CD8-positive, alpha-beta T cell (primary cell): ENCODE measurements at regions of chr2 and their contacts with region 1.

Region 1: DNA sequence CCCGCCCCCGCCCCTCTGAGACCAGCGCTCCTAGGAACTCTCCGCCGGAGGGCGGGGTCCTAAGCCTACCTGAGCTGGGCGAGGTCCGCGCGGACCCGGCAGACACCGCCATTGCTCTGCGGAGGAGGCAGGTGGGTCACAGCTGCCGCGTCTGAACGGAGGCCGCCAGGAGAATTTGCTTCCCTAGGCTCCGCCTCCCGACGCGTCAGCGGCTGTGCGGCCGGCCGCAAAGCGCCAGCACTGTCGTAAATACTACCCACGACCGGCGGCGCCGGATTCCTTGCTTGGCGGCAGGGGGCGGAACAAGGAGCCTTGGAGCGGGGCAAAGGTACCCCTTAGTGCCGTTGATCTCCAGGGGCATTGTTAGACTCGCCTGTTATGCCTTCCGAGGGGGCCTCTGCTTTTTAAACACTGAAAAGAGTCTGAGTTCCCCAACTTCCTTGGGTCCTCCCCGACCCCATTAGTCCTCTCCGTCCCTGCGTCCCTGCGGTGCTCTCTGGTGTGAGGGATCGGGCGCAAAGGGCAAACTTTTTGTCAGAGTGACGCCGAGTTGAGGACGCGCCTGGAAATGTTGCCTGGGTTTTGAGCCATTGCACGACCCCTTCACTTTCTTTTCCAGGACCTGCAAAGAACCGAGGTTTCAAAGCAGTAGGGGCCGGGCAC is at the start of gene GGCX:
- DNase-seq: peak; percentile 89 to 97 (median 96)
- ATAC-seq: peak; percentile 91
- H3K4me3 ChIP-seq: peak within 1 kb of the TSS; percentile 77 to 82
- H3K4me3 Mint-ChIP-seq: peak within 1 kb of the TSS; percentile 94
- H3K27ac ChIP-seq: peak within 1 kb of the TSS; percentile 72 to 73
- H3K27ac Mint-ChIP-seq: peak within 1 kb of the TSS; percentile 96
- H3K4me1 ChIP-seq: peaks cover 6% of the 10 kb centered on the region
- H3K4me1 Mint-ChIP-seq: peaks cover 21% of the 10 kb centered on the region
- H3K27me3 ChIP-seq: no peaks in the 10 kb centered on the region
- H3K27me3 Mint-ChIP-seq: no peaks in the 10 kb centered on the region
- CTCF ChIP-seq: no peak
- total RNA-seq, gene GGCX: 20.7 to 24.0 TPM

Region 2: GRCh38 chr2:85354286-85355072 is 207.0 kb before region 1 on chr2 and contains the starts of genes ELMOD3 and RETSAT:
- CTCF ChIA-PET with region 1: interaction called, 9 read pairs
- POLR2A ChIA-PET with region 1: interaction called, 3 read pairs
- intact Hi-C with region 1: loop called in 1 of 2 experiments (anchors 5 kb)
- DNase-seq: peak; percentile 92 to 99 (median 95)
- ATAC-seq: peak; percentile 98
- H3K4me3 ChIP-seq: peak within 1 kb of the TSS; percentile 85 to 94
- H3K4me3 Mint-ChIP-seq: peak within 1 kb of the TSS; percentile 100
- H3K27ac ChIP-seq: peak within 1 kb of the TSS; percentile 82 to 92
- H3K27ac Mint-ChIP-seq: peak within 1 kb of the TSS; percentile 100
- H3K4me1 ChIP-seq: peaks cover 31% of the 10 kb centered on the region
- H3K4me1 Mint-ChIP-seq: peaks cover 51% of the 10 kb centered on the region
- H3K27me3 ChIP-seq: no peaks in the 10 kb centered on the region
- H3K27me3 Mint-ChIP-seq: no peaks in the 10 kb centered on the region
- CTCF ChIP-seq: no peak
- total RNA-seq, gene ELMOD3: 10.8 to 12.1 TPM
- total RNA-seq, gene RETSAT: 19.0 to 19.6 TPM

Region 3: GRCh38 chr2:85577386-85578242 is 16.2 kb after region 1 on chr2 and contains the start of gene VAMP8:
- CTCF ChIA-PET with region 1: interaction called, 3 read pairs
- POLR2A ChIA-PET with region 1: interaction called, 4 read pairs
- intact Hi-C with region 1: loop called in 1 of 2 experiments (anchors 2 kb)
- DNase-seq: peak; percentile 28 to 78 (median 64)
- ATAC-seq: peak; percentile 79
- H3K4me3 ChIP-seq: peak within 1 kb of the TSS; percentile 76 to 85
- H3K4me3 Mint-ChIP-seq: peak within 1 kb of the TSS; percentile 93
- H3K27ac ChIP-seq: peak within 1 kb of the TSS; percentile 64 to 78
- H3K27ac Mint-ChIP-seq: peak within 1 kb of the TSS; percentile 92
- H3K4me1 ChIP-seq: peaks cover 18% of the 10 kb centered on the region
- H3K4me1 Mint-ChIP-seq: peaks cover 43% of the 10 kb centered on the region
- H3K27me3 ChIP-seq: no peaks in the 10 kb centered on the region
- H3K27me3 Mint-ChIP-seq: no peaks in the 10 kb centered on the region
- CTCF ChIP-seq: no peak
- total RNA-seq, gene VAMP8: 28.1 to 28.7 TPM

Region 4: DNA sequence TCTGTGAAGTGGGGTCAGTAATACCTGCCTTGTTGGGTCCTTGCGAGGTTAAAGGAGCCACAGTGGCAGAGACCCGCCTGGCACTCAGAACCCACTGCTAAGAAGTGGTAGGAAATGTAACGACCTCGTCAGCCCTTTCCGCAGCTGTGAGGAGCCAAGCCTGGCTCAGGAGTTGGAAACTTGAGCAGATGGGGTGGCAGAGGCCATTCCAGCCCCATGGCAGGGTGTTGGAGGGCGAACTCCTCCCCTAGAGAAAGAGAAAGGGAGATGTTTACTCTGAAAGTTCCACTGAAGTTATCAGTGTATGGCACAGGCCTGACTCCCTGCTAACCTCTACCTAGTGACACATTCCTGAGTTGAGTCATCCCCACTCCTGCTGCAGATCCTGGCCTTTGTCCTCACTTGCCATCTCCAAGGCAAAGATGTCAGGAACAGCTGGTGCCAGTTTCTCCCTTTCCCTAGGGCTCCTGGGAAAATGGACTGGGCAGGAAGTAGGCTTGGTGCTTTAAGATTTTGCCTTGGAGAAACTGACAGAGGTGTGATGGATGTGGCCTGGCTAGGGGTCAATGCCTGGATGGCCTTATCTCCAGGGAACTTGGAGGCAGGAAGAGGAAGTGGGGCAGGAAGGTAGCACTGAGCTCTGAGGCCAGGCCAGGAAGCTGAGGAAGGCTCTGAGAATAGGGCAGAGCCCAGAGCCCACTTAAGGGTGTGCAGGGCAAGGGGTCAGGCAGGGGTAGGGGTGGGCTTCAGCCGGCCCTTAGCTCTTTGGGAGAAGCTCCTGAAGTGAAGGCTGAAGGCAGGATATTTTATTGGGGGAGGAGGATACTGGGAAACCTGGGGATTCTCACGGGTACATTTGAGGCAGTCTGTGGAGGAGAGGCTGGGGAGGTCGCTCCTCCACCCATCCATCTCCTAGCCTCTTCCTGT is 23.7 kb after region 1 on chr2:
- CTCF ChIA-PET with region 1: interaction called, 3 read pairs
- POLR2A ChIA-PET with region 1: interaction called, 13 read pairs
- intact Hi-C with region 1: no loop called
- DNase-seq: peak in 4 of 9 experiments; percentile 19 to 60 (median 40)
- ATAC-seq: peak; percentile 45
- H3K4me3 ChIP-seq: peak overlapping the region; percentile 67 to 78
- H3K4me3 Mint-ChIP-seq: peak overlapping the region; percentile 90
- H3K27ac ChIP-seq: peak overlapping the region; percentile 54 to 76
- H3K27ac Mint-ChIP-seq: peak overlapping the region; percentile 94
- H3K4me1 ChIP-seq: peaks cover 33% of the 10 kb centered on the region
- H3K4me1 Mint-ChIP-seq: peaks cover 57% of the 10 kb centered on the region
- H3K27me3 ChIP-seq: no peaks in the 10 kb centered on the region
- H3K27me3 Mint-ChIP-seq: no peaks in the 10 kb centered on the region
- CTCF ChIP-seq: no peak

Region 5: GRCh38 chr2:85595301-85596025 is 34.0 kb after region 1 on chr2 and contains the start of gene RNF181:
- CTCF ChIA-PET with region 1: interaction called, 3 read pairs
- POLR2A ChIA-PET with region 1: interaction called, 5 read pairs
- intact Hi-C with region 1: loop called (anchors 2 kb)
- DNase-seq: peak; percentile 72 to 97 (median 89)
- ATAC-seq: peak; percentile 98
- H3K4me3 ChIP-seq: peak within 1 kb of the TSS; percentile 75 to 78
- H3K4me3 Mint-ChIP-seq: peak within 1 kb of the TSS; percentile 97
- H3K27ac ChIP-seq: peak within 1 kb of the TSS; percentile 73 to 77
- H3K27ac Mint-ChIP-seq: peak within 1 kb of the TSS; percentile 97
- H3K4me1 ChIP-seq: peaks cover 25% of the 10 kb centered on the region
- H3K4me1 Mint-ChIP-seq: peaks cover 35% of the 10 kb centered on the region
- H3K27me3 ChIP-seq: no peaks in the 10 kb centered on the region
- H3K27me3 Mint-ChIP-seq: no peaks in the 10 kb centered on the region
- CTCF ChIP-seq: no peak
- total RNA-seq, gene RNF181: 38.1 to 41.0 TPM

Region 6: GRCh38 chr2:85602476-85603234 is 41.2 kb after region 1 on chr2 and contains the start of gene TMEM150A:
- CTCF ChIA-PET with region 1: interaction called, 4 read pairs
- POLR2A ChIA-PET with region 1: interaction called, 4 read pairs
- intact Hi-C with region 1: loop called in 1 of 2 experiments (anchors 2 kb)
- DNase-seq: peak; percentile 71 to 93 (median 87)
- ATAC-seq: peak; percentile 91
- H3K4me3 ChIP-seq: peak within 1 kb of the TSS; percentile 92 to 97
- H3K4me3 Mint-ChIP-seq: peak within 1 kb of the TSS; percentile 91
- H3K27ac ChIP-seq: peak within 1 kb of the TSS; percentile 58 to 67
- H3K27ac Mint-ChIP-seq: peak within 1 kb of the TSS; percentile 89
- H3K4me1 ChIP-seq: peaks cover 27% of the 10 kb centered on the region
- H3K4me1 Mint-ChIP-seq: peaks cover 37% of the 10 kb centered on the region
- H3K27me3 ChIP-seq: no peaks in the 10 kb centered on the region
- H3K27me3 Mint-ChIP-seq: no peaks in the 10 kb centered on the region
- CTCF ChIP-seq: no peak
- total RNA-seq, gene TMEM150A: 5.7 to 6.0 TPM

Region 7: DNA sequence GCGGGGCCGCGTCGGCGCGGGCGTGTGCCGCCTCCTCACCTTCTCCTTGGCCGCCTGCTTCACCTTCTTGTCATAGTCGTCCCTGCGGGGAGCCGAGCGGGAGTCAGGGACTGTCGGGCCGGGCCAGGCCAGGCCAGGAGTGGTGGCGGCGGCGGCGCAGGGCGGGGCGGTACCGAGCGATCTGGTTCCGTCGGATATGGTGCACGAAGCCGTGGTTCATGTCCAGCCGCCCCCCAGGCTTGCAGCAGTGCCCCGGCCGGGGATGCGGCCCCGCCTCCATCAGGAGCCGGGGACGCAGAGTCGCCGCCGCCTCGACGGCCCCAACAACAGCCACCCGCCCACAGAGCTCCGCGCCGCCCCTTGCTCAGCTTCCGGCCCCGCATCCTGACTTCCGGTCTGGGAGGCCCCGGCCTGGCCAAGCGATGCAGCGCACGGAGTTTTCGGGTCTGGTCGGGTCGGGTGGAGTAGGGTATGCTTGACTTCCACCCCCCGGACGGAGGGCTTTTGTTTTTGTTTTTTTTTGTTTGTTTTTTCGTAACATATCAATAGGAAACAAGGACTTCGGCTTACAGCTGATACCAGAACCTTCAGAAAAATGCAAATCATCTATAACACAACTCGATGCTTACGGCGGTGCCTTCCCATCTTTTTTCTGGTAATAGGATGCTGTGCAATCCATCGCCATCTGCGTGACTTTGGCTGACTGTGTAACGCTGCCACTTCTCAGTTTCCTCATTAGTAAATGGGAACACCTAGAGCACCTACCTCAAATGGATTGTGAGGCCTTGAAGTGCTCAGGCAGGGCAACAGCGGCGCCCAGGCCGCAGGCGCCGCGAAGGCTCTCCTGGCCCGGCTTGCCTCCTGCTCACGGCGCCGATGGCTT is 50.5 kb after region 1 on chr2 and contains the start of gene C2orf68:
- CTCF ChIA-PET with region 1: no interaction called
- POLR2A ChIA-PET with region 1: no interaction called
- intact Hi-C with region 1: loop called (anchors 1 to 2 kb)
- DNase-seq: peak; percentile 49 to 90 (median 83)
- ATAC-seq: peak; percentile 55
- H3K4me3 ChIP-seq: peak within 1 kb of the TSS; percentile 53 to 55
- H3K4me3 Mint-ChIP-seq: peak within 1 kb of the TSS; percentile 97
- H3K27ac ChIP-seq: peak within 1 kb of the TSS; percentile 61 to 70
- H3K27ac Mint-ChIP-seq: peak within 1 kb of the TSS; percentile 95
- H3K4me1 ChIP-seq: peaks cover 26% of the 10 kb centered on the region
- H3K4me1 Mint-ChIP-seq: peaks cover 39% of the 10 kb centered on the region
- H3K27me3 ChIP-seq: no peaks in the 10 kb centered on the region
- H3K27me3 Mint-ChIP-seq: no peaks in the 10 kb centered on the region
- CTCF ChIP-seq: no peak
- total RNA-seq, gene C2orf68: 23.2 to 27.9 TPM